Activated CD4-positive, alpha-beta T cell treated with anti-CD3 and anti-CD28 coated beads for 36 hours (primary cell): ENCODE measurements at regions of chr3 and their contacts with region 1.

Region 1: DNA sequence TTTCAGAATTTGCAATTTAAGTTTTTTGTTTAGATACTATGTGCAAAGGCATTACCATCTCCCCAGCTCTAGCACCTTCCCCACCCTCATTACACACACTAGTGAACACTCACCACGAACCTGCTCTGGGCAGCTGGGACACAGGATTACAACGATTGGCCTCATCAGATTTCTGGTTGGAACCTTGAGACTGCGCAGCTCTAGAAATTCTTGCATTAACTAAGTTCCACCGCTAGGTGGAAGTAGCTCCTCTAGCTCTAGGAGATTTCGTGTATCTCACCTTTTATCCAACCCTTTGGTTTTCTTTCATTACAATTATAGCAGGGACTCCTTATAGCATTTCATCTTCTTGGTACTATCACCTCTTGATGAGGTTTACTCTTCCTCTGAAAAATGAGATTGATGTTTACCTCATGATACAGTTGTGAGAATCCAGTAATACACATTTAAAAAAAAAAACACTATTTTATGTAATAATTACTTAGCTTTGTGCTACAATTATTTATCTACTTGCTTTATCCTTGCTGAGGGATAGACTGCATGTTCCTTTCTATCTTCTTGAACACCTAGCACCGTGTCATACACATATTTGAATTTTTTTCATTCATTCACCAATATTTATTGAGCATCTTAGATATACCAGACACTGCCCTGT is 28.7 kb upstream of the PLOD2 start:
- DNase-seq: no peak
- ATAC-seq: peak; percentile 76
- H3K4me3 Mint-ChIP-seq: no peak overlapping the region
- H3K27ac Mint-ChIP-seq: no peak overlapping the region
- H3K4me1 Mint-ChIP-seq: no peaks in the 10 kb centered on the region
- H3K27me3 Mint-ChIP-seq: peaks cover 10% of the 10 kb centered on the region

Region 2: GRCh38 chr3:145776782-145777408 is 412.8 kb before region 1 on chr3:
- CTCF ChIA-PET with region 1: interaction called, 3 read pairs
- POLR2A ChIA-PET with region 1: no interaction called
- intact Hi-C with region 1: loop called in 1 of 2 experiments (anchors 2 kb)
- DNase-seq: peak; percentile 26
- ATAC-seq: no peak
- H3K4me3 Mint-ChIP-seq: no peak overlapping the region
- H3K27ac Mint-ChIP-seq: no peak overlapping the region
- H3K4me1 Mint-ChIP-seq: no peaks in the 10 kb centered on the region
- H3K27me3 Mint-ChIP-seq: no peaks in the 10 kb centered on the region

Region 3: DNA sequence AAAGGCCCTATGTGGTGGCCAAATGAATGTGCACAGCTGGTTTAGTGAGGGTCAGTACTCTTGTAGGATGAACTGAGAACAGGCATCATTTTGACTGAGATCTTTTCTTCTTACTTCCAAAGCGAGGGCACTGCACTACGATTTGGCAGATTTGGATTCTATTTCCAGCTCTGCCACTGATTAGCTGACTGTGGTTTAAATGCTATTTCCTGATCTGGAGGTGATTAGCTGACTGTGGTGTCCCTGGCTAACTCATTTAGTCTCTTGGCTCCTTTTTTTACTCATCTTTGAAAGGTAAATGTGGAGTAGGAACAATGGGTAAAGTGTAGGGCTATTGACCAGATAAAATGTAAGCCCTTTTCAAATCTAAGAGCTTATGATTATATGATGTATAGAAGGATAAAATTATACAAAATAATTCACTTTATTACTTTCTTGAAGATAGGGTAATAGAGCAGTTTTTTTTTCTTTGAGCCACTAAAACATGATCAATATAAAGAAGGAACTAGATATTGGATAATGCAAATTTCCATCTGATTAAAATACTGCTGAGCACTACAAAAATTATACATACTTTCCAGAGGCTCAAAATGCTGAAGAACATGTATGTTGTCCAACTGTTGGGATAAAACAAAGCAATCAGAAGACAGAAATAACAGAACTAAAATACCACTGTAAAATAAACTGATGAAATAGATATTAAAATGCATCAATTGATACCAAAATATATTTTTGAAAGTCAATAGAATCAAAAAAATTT is 11.0 kb after region 1 on chr3:
- CTCF ChIA-PET with region 1: interaction called, 16 read pairs
- POLR2A ChIA-PET with region 1: no interaction called
- intact Hi-C with region 1: no loop called
- DNase-seq: no peak
- ATAC-seq: no peak
- H3K4me3 Mint-ChIP-seq: no peak overlapping the region
- H3K27ac Mint-ChIP-seq: no peak overlapping the region
- H3K4me1 Mint-ChIP-seq: no peaks in the 10 kb centered on the region
- H3K27me3 Mint-ChIP-seq: peaks cover 7% of the 10 kb centered on the region